CD4-positive, alpha-beta memory T cell (primary cell): ENCODE measurements at regions of chr18 and their contacts with region 1.

Region 1: GRCh38 chr18:3454365-3455089 is 4.6 kb downstream of the TGIF1 start:
- DNase-seq: peak; percentile 53 to 61 (median 57)
- H3K4me3 ChIP-seq: peak overlapping the region; percentile 40 to 52
- H3K4me3 Mint-ChIP-seq: peak overlapping the region; percentile 80 to 97 (median 95)
- H3K27ac ChIP-seq: peak overlapping the region; percentile 94
- H3K27ac Mint-ChIP-seq: peak overlapping the region; percentile 87 to 100 (median 98)
- H3K4me1 ChIP-seq: peaks cover 70% of the 10 kb centered on the region
- H3K4me1 Mint-ChIP-seq: peaks cover 43 to 84% (median 59%) of the 10 kb centered on the region in 4 donors
- H3K27me3 ChIP-seq: no peaks in the 10 kb centered on the region
- H3K27me3 Mint-ChIP-seq: peaks cover 0 to 2% of the 10 kb centered on the region in 2 donors

Region 2: DNA sequence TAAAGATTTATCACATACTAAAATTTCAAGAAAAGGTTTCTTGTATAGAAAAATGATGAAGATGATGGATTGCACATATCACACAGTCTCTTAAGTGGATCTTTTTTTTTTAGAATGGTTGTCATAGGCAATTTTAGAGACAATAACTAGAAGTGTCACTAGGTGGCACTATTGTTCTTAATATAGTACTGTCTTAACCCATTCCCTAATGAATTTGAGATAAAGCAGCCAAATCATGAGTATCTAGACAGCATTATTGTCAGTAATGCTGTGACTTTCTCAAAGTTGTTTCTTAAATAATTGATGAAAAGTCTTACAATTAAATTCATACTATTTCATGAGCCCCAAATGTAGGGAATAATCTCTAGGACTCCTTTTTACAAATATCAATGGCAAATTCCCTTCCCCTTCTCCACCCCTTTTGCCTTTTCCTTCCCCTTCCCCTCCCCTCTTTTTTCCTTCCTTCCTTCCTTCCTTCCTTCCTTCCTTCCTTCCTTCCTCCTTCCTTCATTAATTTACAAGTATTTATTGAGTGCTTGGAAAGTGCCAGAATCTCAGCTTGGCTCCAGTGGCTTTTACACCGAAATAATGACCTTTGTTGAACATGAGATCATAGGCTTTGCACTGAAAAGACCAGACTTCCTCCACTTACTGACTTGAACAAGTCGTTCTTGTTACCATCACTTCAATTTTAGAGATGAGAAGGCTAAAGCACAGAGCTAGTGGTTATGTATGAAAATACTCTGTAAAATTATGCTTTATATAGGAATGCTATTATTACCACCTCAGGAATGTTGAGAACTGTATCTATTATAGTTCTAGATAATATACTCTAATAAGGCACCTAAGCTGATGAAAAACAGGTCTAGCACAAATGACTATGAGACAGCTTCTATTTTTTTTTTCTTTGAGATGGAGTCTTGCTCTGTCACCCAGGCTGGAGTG is 172.8 kb before region 1 on chr18:
- CTCF ChIA-PET with region 1: interaction called, 31 read pairs
- POLR2A ChIA-PET with region 1: interaction called, 5 read pairs
- intact Hi-C with region 1: loop called (anchors 1 kb)
- DNase-seq: peak in 4 of 5 donors; percentile 69 to 73 (median 72)
- H3K4me3 ChIP-seq: no peak overlapping the region
- H3K4me3 Mint-ChIP-seq: no peak overlapping the region
- H3K27ac ChIP-seq: no peak overlapping the region
- H3K27ac Mint-ChIP-seq: no peak overlapping the region
- H3K4me1 ChIP-seq: no peaks in the 10 kb centered on the region
- H3K4me1 Mint-ChIP-seq: peaks cover 0 to 4% (median 1%) of the 10 kb centered on the region in 4 donors
- H3K27me3 ChIP-seq: no peaks in the 10 kb centered on the region
- H3K27me3 Mint-ChIP-seq: no peaks in the 10 kb centered on the region

Region 3: DNA sequence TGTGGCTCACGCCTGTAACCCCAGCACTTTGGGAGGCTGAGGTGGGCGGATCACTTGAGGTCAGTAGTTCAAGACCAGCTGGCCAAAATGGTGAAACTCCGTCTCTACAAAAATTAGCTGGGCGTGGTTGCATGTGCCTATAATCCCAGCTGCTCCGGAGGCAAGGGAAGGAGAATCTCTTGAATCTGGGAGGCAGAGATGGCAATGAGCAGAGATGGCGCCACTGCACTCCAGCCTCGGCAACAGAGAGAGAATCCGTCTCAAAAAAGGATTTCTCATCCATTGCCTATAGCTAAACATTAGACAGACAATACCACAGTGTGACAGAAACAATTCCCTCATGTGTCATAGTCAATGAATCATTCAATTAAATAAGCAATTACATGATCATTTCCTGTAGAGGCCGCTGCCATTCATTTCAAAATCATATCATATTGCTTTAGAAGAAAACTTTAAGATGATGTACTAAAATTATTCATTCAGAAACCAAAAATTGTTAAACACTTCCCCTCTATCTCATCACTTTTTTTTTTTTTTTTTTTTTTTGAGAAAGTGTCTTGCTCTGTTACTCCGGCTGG is 74.1 kb before region 1 on chr18:
- CTCF ChIA-PET with region 1: interaction called, 51 read pairs
- POLR2A ChIA-PET with region 1: interaction called, 3 read pairs
- intact Hi-C with region 1: loop called (anchors 1 kb)
- DNase-seq: peak in 4 of 5 donors; percentile 22 to 44 (median 34)
- H3K4me3 ChIP-seq: no peak overlapping the region
- H3K4me3 Mint-ChIP-seq: no peak overlapping the region
- H3K27ac ChIP-seq: no peak overlapping the region
- H3K27ac Mint-ChIP-seq: no peak overlapping the region
- H3K4me1 ChIP-seq: no peaks in the 10 kb centered on the region
- H3K4me1 Mint-ChIP-seq: peaks cover 0 to 2% (median 0%) of the 10 kb centered on the region in 4 donors
- H3K27me3 ChIP-seq: no peaks in the 10 kb centered on the region
- H3K27me3 Mint-ChIP-seq: peaks cover 0 to 5% of the 10 kb centered on the region in 2 donors

Region 4: DNA sequence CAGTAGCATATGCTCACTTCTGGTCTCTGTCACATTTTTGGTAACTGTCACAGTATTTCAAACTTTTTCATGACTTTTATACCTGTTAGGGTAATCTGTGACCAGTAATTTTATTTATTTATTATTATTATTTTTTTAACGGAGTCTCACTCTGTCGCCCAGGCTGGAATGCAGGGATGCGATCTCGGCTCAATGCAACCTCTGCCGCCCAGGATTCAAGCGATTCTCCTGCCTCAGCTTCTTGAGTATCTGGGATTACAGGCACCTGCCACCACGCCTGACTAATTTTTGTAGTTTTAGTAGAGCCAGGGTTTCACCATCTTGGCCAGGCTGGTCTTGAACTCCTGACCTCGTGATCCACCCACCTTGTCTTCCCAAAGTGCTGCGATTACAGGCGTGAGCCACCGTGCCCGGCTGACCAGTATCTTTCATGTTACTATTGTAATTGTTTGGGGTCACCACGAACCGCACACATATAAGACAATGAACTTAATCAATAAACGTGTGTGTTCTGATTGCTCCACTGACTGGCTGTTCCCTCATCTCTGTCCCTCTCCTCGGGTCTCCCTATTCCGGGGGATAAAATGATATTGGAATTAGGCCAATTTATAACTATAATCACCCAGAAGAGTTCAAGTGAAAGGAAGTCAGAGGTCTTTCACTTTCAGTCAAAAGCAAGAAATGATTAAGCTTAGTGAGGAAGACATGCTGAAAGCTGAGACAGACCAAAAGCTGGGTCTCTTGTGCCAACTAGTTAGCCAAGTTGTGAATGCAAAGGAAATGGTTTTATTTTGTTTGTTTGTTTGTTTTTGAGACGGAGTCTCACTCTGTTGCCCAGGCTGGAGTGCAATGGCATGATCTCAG is 18.4 kb after region 1 on chr18:
- CTCF ChIA-PET with region 1: interaction called, 68 read pairs
- POLR2A ChIA-PET with region 1: interaction called, 61 read pairs
- intact Hi-C with region 1: no loop called
- DNase-seq: no peak
- H3K4me3 ChIP-seq: no peak overlapping the region
- H3K4me3 Mint-ChIP-seq: peak overlapping the region in 4 of 8 donors; percentile 23 to 70 (median 54)
- H3K27ac ChIP-seq: no peak overlapping the region
- H3K27ac Mint-ChIP-seq: peak overlapping the region in 3 of 7 donors; percentile 3 to 79 (median 79)
- H3K4me1 ChIP-seq: no peaks in the 10 kb centered on the region
- H3K4me1 Mint-ChIP-seq: peaks cover 4 to 12% (median 8%) of the 10 kb centered on the region in 4 donors
- H3K27me3 ChIP-seq: no peaks in the 10 kb centered on the region
- H3K27me3 Mint-ChIP-seq: no peaks in the 10 kb centered on the region

Region 5: DNA sequence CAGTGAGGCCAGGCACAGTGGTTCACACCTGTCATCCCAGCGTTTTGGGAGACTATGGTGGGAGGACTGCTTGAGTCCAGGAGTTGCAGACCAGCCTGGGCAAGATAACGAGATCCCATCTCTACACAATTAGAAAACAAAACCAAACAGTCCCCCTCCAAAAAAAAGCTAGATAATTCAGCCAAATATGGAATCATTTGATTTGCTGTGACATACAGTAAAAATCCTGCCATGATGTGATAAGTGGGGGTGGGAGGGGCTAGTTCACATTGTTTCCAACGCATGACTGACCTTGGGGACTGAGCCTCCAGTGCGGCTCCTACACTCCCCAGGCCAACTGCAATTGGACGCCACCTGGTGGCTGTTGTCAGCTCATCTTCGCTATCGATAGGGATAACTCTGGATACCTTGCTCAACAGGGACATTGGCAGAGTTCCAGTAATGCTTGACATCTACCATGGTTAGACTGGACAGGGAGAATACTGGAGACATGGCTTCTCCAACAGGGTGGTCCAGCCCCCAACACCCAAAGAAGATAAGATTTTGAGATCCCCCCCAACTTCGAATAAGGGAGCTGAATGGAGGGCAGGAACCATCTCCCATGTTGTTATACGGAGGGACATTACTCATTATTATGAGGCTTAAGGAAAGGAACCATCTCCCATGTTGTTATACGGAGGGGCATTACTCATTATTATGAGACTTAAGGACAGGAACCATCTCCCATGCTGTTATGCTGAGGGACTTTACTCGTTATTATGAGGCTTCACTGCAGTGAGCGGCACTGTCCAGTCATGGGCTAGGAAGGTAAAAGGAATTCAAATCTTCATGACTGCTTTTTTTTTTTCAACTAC is 131.4 kb after region 1 on chr18:
- CTCF ChIA-PET with region 1: interaction called, 43 read pairs
- POLR2A ChIA-PET with region 1: interaction called, 164 read pairs
- intact Hi-C with region 1: no loop called
- DNase-seq: peak; percentile 55 to 69 (median 60)
- H3K4me3 ChIP-seq: no peak overlapping the region
- H3K4me3 Mint-ChIP-seq: peak overlapping the region in 4 of 8 donors; percentile 14 to 39 (median 30)
- H3K27ac ChIP-seq: no peak overlapping the region
- H3K27ac Mint-ChIP-seq: peak overlapping the region in 6 of 7 donors; percentile 64 to 86 (median 76)
- H3K4me1 ChIP-seq: peaks cover 13% of the 10 kb centered on the region
- H3K4me1 Mint-ChIP-seq: peaks cover 7 to 19% (median 12%) of the 10 kb centered on the region in 4 donors
- H3K27me3 ChIP-seq: no peaks in the 10 kb centered on the region
- H3K27me3 Mint-ChIP-seq: no peaks in the 10 kb centered on the region

Region 6: GRCh38 chr18:3665780-3666525 is 211.4 kb after region 1 on chr18:
- CTCF ChIA-PET with region 1: interaction called, 80 read pairs
- POLR2A ChIA-PET with region 1: interaction called, 4 read pairs
- intact Hi-C with region 1: loop called (anchors 1 kb)
- DNase-seq: peak; percentile 62 to 70 (median 68)
- H3K4me3 ChIP-seq: no peak overlapping the region
- H3K4me3 Mint-ChIP-seq: peak overlapping the region in 5 of 8 donors; percentile 22 to 64 (median 38)
- H3K27ac ChIP-seq: no peak overlapping the region
- H3K27ac Mint-ChIP-seq: peak overlapping the region in 1 of 7 donors; percentile 35
- H3K4me1 ChIP-seq: peaks cover 5% of the 10 kb centered on the region
- H3K4me1 Mint-ChIP-seq: peaks cover 2 to 9% (median 5%) of the 10 kb centered on the region in 4 donors
- H3K27me3 ChIP-seq: no peaks in the 10 kb centered on the region
- H3K27me3 Mint-ChIP-seq: peaks cover 2 to 3% of the 10 kb centered on the region in 2 donors

Region 7: DNA sequence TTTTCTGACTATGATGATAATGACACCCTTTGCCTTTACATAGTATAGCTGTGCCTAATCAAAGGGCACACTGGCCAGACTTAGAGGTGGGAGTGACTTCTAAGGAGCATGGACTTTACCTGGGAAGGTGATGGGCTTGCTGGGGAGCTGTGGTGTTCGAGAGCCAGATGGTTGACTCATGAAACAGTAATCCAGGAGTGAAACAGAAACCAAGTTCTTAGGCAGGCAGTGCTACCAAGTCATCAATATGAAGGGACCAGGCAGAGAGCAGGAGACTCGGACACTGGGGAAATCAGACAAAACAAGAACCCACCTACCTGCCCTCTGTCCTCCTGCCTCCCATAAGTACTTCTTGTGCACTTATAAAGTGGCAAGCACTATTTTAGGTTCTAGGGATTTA is 570.2 kb after region 1 on chr18:
- CTCF ChIA-PET with region 1: no interaction called
- POLR2A ChIA-PET with region 1: no interaction called
- intact Hi-C with region 1: no loop called
- DNase-seq: no peak
- H3K4me3 ChIP-seq: no peak overlapping the region
- H3K4me3 Mint-ChIP-seq: no peak overlapping the region
- H3K27ac ChIP-seq: no peak overlapping the region
- H3K27ac Mint-ChIP-seq: no peak overlapping the region
- H3K4me1 ChIP-seq: no peaks in the 10 kb centered on the region
- H3K4me1 Mint-ChIP-seq: no peaks in the 10 kb centered on the region
- H3K27me3 ChIP-seq: no peaks in the 10 kb centered on the region
- H3K27me3 Mint-ChIP-seq: peaks cover 3 to 4% of the 10 kb centered on the region in 2 donors